Heart left ventricle (tissue), 16 donors: ENCODE measurements at regions of chr13 and their contacts with region 1.

Region 1: GRCh38 chr13:59906413-59907049 is 257.2 kb downstream of the DIAPH3 start:
- DNase-seq: no peak
- ATAC-seq: no peak
- H3K4me3 ChIP-seq: no peak overlapping the region
- H3K27ac ChIP-seq: no peak overlapping the region
- H3K4me1 ChIP-seq: no peaks in the 10 kb centered on the region
- H3K27me3 ChIP-seq: no peaks in the 10 kb centered on the region
- CTCF ChIP-seq: peak in 11 of 12 donors; percentile 25 to 64 (median 51)
- POLR2A ChIP-seq: no peak

Region 2: DNA sequence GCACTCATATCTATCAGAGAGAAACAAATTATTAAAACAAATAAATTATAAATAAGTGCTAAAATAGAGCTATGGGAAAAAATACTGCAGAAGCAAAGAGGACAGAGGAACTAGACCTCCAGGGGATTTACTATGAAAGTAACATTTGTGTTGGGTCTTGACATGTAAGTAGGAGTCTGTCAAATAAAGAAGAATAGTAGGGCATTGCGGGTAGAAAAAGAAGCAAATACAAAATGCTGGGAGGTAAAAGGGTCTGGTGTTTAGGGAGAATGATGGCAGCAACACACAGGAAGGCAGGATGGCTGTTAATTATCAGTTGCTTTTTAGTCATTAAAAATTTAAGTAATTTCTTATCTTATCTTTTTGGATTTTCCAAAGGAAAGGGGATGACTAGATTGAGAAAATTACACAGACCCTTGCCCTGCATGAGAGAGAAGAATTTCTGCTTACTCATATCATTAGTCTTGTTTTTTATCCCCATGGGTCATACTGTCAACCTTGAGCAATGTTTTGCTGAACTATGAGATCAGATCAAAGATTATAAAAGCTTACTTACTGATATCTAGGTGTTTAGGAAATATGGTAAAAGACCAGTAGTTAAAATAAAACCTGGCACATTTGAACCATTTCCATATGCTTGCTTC is 215.6 kb before region 1 on chr13:
- intact Hi-C with region 1: loop called in 1 of 10 experiments (anchors 10 kb)
- DNase-seq: no peak
- ATAC-seq: no peak
- H3K4me3 ChIP-seq: no peak overlapping the region
- H3K27ac ChIP-seq: no peak overlapping the region
- H3K4me1 ChIP-seq: no peaks in the 10 kb centered on the region
- H3K27me3 ChIP-seq: no peaks in the 10 kb centered on the region
- CTCF ChIP-seq: no peak
- POLR2A ChIP-seq: no peak